CD4-positive, alpha-beta memory T cell (primary cell): ENCODE measurements at regions of chr2 and their contacts with region 1.

Region 1: DNA sequence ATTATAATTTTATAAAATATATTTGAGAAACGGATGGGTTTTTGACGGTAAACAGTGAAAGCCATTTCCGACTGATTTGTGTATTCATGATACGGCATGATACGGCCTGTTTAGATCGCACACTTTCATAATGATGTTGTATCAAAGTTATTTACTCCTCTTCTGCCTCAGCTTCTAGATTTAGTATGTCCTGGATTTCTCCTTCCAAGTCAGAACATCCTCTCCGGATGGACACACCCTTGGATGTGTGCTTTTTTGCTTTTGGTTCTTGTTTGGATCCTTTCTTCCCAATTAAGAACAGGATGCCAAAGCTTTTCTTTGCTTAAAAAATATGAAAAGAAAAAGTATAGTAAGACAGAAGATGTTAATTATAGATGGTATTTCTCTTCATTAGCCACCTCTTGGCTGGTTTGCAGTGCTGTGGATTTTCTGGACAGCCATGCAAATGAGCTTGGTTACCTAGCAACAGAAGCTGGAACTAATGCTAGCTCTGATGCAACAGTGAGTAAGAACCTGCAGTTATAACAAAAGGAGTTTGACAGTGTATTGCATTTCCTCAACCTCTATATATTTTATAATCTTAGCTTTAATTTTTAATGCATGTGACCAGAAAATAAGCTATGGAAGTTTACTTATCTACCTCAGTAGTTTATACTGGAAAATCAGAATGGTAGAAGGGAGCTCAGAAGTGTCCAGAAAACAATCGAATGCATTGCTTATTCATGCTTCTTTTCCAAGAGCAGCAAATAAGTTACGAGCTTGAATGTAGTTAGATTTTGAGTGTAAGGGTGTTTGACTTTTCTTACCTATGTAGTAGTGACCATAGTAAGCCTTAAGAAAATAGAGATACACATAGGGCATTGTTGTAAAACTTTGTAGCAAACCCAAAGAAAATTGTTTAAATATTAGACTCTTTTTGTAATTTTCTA is 27.9 kb downstream of the RMND5A start:
- DNase-seq: no peak
- H3K4me3 ChIP-seq: no peak overlapping the region
- H3K4me3 Mint-ChIP-seq: no peak overlapping the region
- H3K27ac ChIP-seq: no peak overlapping the region
- H3K27ac Mint-ChIP-seq: peak overlapping the region in 1 of 7 donors; percentile 71
- H3K4me1 ChIP-seq: peaks cover 18% of the 10 kb centered on the region
- H3K4me1 Mint-ChIP-seq: peaks cover 30 to 52% (median 43%) of the 10 kb centered on the region in 4 donors
- H3K27me3 ChIP-seq: no peaks in the 10 kb centered on the region
- H3K27me3 Mint-ChIP-seq: no peaks in the 10 kb centered on the region

Region 2: GRCh38 chr2:86649119-86649947 is 98.6 kb before region 1 on chr2:
- CTCF ChIA-PET with region 1: no interaction called
- POLR2A ChIA-PET with region 1: no interaction called
- intact Hi-C with region 1: no loop called
- DNase-seq: no peak
- H3K4me3 ChIP-seq: no peak overlapping the region
- H3K4me3 Mint-ChIP-seq: peak overlapping the region in 1 of 8 donors; percentile 13
- H3K27ac ChIP-seq: no peak overlapping the region
- H3K27ac Mint-ChIP-seq: no peak overlapping the region
- H3K4me1 ChIP-seq: no peaks in the 10 kb centered on the region
- H3K4me1 Mint-ChIP-seq: no peaks in the 10 kb centered on the region
- H3K27me3 ChIP-seq: no peaks in the 10 kb centered on the region
- H3K27me3 Mint-ChIP-seq: peaks cover 8 to 16% of the 10 kb centered on the region in 2 donors

Region 3: GRCh38 chr2:86686905-86687304 is 61.1 kb before region 1 on chr2:
- CTCF ChIA-PET with region 1: no interaction called
- POLR2A ChIA-PET with region 1: no interaction called
- intact Hi-C with region 1: loop called (anchors 10 kb)
- DNase-seq: no peak
- H3K4me3 ChIP-seq: no peak overlapping the region
- H3K4me3 Mint-ChIP-seq: no peak overlapping the region
- H3K27ac ChIP-seq: no peak overlapping the region
- H3K27ac Mint-ChIP-seq: no peak overlapping the region
- H3K4me1 ChIP-seq: no peaks in the 10 kb centered on the region
- H3K4me1 Mint-ChIP-seq: no peaks in the 10 kb centered on the region
- H3K27me3 ChIP-seq: no peaks in the 10 kb centered on the region
- H3K27me3 Mint-ChIP-seq: peaks cover 1 to 5% of the 10 kb centered on the region in 2 donors

Region 4: DNA sequence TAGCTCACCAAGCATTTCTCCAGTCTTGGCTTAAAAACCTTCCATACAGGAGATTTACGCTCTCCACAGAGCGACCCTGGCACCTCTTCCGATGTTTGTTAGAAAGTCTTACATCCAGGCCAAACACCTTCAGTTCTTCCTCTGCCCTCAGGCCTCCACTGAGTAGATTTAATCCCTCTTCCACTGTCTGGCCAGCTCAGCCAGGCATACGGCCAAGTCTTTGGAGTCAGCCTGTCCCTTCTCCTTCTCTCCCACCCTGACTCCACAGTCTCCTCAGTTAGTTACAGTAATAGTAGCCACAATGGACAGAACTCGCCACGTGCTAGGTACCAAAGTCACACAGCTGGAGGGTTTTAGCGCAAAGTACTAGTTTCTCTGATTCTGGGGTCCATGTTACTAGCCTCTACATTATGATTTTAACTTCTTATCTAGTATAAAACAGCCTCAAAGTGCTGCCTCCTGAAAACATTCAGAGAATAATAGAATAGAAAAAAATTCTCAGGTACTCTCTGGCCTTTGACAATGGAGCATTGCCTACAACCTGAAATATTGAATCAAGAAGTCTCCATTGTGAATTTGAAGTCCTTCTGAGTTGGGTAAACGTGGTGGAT is 1461.7 kb after region 1 on chr2:
- CTCF ChIA-PET with region 1: no interaction called
- POLR2A ChIA-PET with region 1: no interaction called
- intact Hi-C with region 1: no loop called
- DNase-seq: no peak
- H3K4me3 ChIP-seq: no peak overlapping the region
- H3K4me3 Mint-ChIP-seq: no peak overlapping the region
- H3K27ac ChIP-seq: no peak overlapping the region
- H3K27ac Mint-ChIP-seq: no peak overlapping the region
- H3K4me1 ChIP-seq: no peaks in the 10 kb centered on the region
- H3K4me1 Mint-ChIP-seq: no peaks in the 10 kb centered on the region
- H3K27me3 ChIP-seq: no peaks in the 10 kb centered on the region
- H3K27me3 Mint-ChIP-seq: peaks cover 7 to 23% of the 10 kb centered on the region in 2 donors